Activated CD4-positive, alpha-beta T cell treated with anti-CD3 and anti-CD28 coated beads for 36 hours (primary cell): ENCODE measurements at regions of chr13 and their contacts with region 1.

Region 1: DNA sequence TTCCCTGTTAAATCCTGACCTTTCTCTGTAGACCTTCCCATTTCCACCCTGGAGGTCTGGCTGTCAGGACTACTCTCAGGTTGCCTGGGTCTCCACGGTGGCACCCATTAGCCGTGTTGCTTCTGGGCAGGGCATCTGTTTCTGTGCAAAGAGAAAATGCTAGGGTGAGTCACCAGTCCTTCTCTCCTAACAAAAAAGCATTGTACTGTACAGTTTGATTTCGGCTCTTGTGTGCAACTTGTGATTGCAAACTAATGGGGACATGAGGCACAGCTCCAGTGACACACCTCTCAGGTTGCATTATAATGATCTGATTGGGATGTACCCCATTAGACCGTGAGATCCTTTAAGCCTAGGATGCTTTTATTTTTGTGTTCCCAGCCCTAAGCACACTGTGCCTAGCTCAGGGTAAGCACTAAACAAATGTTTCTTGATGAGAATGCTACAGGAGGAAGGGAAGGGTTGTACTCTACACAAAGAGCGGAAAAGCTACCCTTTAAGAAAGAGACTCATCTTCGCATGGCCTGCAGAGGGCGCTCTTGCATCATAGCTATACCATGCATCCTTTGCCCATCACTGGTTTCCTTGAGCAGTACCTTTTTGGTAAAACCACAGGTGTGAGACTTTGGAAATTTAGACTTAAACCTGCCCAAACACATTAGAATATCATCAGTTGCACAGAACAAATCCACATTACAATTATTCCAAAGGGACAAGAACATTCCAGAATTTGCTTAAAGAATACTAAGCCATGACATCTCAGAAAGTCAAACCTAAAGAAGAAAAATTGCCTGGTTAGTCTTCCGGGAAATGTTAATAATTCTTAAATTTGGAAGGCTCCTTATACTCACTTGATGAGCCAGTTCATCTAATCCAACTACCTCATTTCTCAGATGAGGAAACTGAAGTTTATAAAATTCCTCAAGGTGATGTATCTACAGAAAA is 20.3 kb upstream of the TRIM13 start:
- DNase-seq: peak; percentile 87
- ATAC-seq: peak; percentile 83
- H3K4me3 Mint-ChIP-seq: no peak overlapping the region
- H3K27ac Mint-ChIP-seq: no peak overlapping the region
- H3K4me1 Mint-ChIP-seq: no peaks in the 10 kb centered on the region
- H3K27me3 Mint-ChIP-seq: no peaks in the 10 kb centered on the region

Region 2: DNA sequence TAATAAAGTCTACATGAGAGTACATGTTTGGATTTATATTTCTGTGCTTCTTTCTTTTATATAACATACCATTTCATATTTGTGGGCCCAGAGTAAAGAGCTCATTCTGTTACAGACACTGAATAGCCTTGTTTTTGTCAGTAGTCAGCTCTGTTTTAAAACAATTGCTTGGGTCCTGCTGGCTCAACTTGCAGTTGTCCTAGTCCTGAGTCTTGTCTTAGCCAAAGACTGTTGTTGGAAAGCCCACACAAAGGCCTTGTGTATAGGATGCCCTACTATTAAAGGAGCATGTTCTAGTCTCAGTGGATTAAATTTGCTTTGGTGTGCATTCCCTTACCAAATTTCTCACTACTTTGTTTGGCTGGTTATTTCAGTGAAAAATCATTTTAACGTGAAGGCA is 34.9 kb after region 1 on chr13:
- CTCF ChIA-PET with region 1: no interaction called
- POLR2A ChIA-PET with region 1: no interaction called
- intact Hi-C with region 1: no loop called
- DNase-seq: no peak
- ATAC-seq: no peak
- H3K4me3 Mint-ChIP-seq: no peak overlapping the region
- H3K27ac Mint-ChIP-seq: no peak overlapping the region
- H3K4me1 Mint-ChIP-seq: peaks cover 28% of the 10 kb centered on the region
- H3K27me3 Mint-ChIP-seq: no peaks in the 10 kb centered on the region

Region 3: GRCh38 chr13:50268500-50268899 is 291.9 kb after region 1 on chr13:
- CTCF ChIA-PET with region 1: no interaction called
- POLR2A ChIA-PET with region 1: no interaction called
- intact Hi-C with region 1: loop called in 1 of 2 experiments (anchors 5 kb)
- DNase-seq: no peak
- ATAC-seq: no peak
- H3K4me3 Mint-ChIP-seq: no peak overlapping the region
- H3K27ac Mint-ChIP-seq: no peak overlapping the region
- H3K4me1 Mint-ChIP-seq: no peaks in the 10 kb centered on the region
- H3K27me3 Mint-ChIP-seq: peaks cover 10% of the 10 kb centered on the region

Region 4: GRCh38 chr13:50401049-50401505 is 424.5 kb after region 1 on chr13:
- CTCF ChIA-PET with region 1: no interaction called
- POLR2A ChIA-PET with region 1: no interaction called
- intact Hi-C with region 1: no loop called
- DNase-seq: no peak
- ATAC-seq: no peak
- H3K4me3 Mint-ChIP-seq: no peak overlapping the region
- H3K27ac Mint-ChIP-seq: no peak overlapping the region
- H3K4me1 Mint-ChIP-seq: no peaks in the 10 kb centered on the region
- H3K27me3 Mint-ChIP-seq: peaks cover 3% of the 10 kb centered on the region

Region 5: DNA sequence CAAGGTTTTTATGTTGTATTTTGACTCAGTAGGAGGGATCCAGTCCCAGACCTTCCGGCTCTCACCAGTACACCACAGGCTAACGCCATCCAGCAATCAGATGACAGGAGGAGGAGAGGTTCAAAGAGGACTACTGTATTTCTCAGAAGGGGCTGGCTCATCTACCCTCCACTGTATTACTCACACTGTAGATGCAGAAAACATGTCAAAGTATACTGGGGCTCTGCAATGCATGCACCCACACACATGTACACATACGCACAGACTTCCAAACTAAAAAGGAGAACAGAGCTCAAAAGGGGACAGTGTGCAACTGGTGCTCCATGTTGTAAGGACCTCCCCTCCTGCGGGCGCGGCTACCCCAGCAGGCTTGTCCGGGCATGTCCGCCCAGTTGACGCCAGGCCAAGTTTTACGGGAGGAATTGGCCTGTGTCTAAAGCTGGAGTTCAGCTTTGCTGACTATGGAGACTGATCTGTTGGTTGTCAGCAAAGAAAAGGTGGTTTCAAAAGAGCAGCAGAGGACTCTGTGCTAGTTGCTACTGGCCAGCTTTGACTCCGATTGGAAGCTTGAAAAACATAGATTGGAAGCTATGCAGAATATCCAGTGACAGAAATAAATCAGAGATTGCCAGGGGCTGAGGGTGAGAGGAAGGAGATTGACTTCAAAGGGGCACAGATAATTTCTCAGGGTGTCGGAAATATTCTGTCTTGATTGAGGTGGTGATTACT is 552.7 kb after region 1 on chr13:
- CTCF ChIA-PET with region 1: interaction called, 10 read pairs
- POLR2A ChIA-PET with region 1: no interaction called
- intact Hi-C with region 1: loop called (anchors 1 kb)
- DNase-seq: peak; percentile 46
- ATAC-seq: peak; percentile 94
- H3K4me3 Mint-ChIP-seq: no peak overlapping the region
- H3K27ac Mint-ChIP-seq: no peak overlapping the region
- H3K4me1 Mint-ChIP-seq: peaks cover 30% of the 10 kb centered on the region
- H3K27me3 Mint-ChIP-seq: no peaks in the 10 kb centered on the region

Region 6: GRCh38 chr13:50543782-50544181 is 567.2 kb after region 1 on chr13:
- CTCF ChIA-PET with region 1: no interaction called
- POLR2A ChIA-PET with region 1: no interaction called
- intact Hi-C with region 1: no loop called
- DNase-seq: no peak
- ATAC-seq: no peak
- H3K4me3 Mint-ChIP-seq: no peak overlapping the region
- H3K27ac Mint-ChIP-seq: no peak overlapping the region
- H3K4me1 Mint-ChIP-seq: no peaks in the 10 kb centered on the region
- H3K27me3 Mint-ChIP-seq: peaks cover 2% of the 10 kb centered on the region

Region 7: GRCh38 chr13:51070005-51070649 is 1093.5 kb after region 1 on chr13:
- CTCF ChIA-PET with region 1: interaction called, 9 read pairs
- POLR2A ChIA-PET with region 1: no interaction called
- intact Hi-C with region 1: loop called (anchors 1 kb)
- DNase-seq: peak; percentile 89
- ATAC-seq: peak; percentile 96
- H3K4me3 Mint-ChIP-seq: no peak overlapping the region
- H3K27ac Mint-ChIP-seq: no peak overlapping the region
- H3K4me1 Mint-ChIP-seq: peaks cover 7% of the 10 kb centered on the region
- H3K27me3 Mint-ChIP-seq: peaks cover 16% of the 10 kb centered on the region